Naive thymus-derived CD4-positive, alpha-beta T cell (primary cell): ENCODE measurements at regions of chr19 and their contacts with region 1.

Region 1: DNA sequence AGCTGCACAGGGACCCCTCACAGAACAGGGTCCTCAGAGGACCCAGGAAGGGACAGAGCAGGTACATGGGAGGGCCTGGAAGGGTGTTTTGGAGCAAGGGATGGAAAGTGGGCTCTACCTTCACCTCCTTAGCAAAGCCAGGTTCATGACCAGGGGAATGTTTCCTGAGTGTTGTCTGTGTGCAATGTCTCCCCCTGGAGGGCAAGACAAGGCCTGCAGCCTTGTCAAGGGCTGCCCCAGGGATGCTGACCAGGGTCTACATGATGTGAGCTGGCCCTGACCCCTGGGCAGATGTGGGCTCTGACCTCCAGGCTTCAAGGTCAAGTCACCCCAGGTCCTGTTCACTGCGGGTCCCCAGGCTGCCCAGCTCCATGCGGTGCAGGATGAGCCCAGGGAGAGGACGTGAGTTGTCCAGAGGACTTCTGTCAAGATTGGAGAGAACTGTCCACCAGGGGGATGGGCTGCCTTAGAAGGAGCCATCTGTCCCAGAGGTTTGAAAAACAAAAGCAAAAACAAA is 1.0 kb upstream of the CEACAM1 start:
- DNase-seq: peak; percentile 45 to 76 (median 64)
- ATAC-seq: peak; percentile 94
- H3K4me3 ChIP-seq: peak overlapping the region; percentile 53
- H3K4me3 Mint-ChIP-seq: peak overlapping the region; percentile 77 to 98 (median 87)
- H3K27ac ChIP-seq: peak overlapping the region; percentile 72
- H3K27ac Mint-ChIP-seq: peak overlapping the region; percentile 70 to 96 (median 93)
- H3K4me1 ChIP-seq: peaks cover 18 to 21% of the 10 kb centered on the region in 2 donors
- H3K4me1 Mint-ChIP-seq: peaks cover 31 to 51% (median 40%) of the 10 kb centered on the region in 7 donors
- H3K27me3 ChIP-seq: no peaks in the 10 kb centered on the region
- H3K27me3 Mint-ChIP-seq: peaks cover 0 to under 1% (median 0%) of the 10 kb centered on the region in 5 donors

Region 2: GRCh38 chr19:42440357-42441048 is 88.8 kb before region 1 on chr19:
- CTCF ChIA-PET with region 1: interaction called, 14 read pairs
- POLR2A ChIA-PET with region 1: no interaction called
- intact Hi-C with region 1: no loop called
- DNase-seq: peak; percentile 51 to 84 (median 76)
- ATAC-seq: peak; percentile 75
- H3K4me3 ChIP-seq: no peak overlapping the region
- H3K4me3 Mint-ChIP-seq: peak overlapping the region in 7 of 10 donors; percentile 24 to 69 (median 47)
- H3K27ac ChIP-seq: no peak overlapping the region
- H3K27ac Mint-ChIP-seq: peak overlapping the region in 8 of 9 donors; percentile 2 to 53 (median 25)
- H3K4me1 ChIP-seq: peaks cover 13 to 16% of the 10 kb centered on the region in 2 donors
- H3K4me1 Mint-ChIP-seq: peaks cover 20 to 34% (median 31%) of the 10 kb centered on the region in 7 donors
- H3K27me3 ChIP-seq: no peaks in the 10 kb centered on the region
- H3K27me3 Mint-ChIP-seq: peaks cover 0 to 7% (median 0%) of the 10 kb centered on the region in 5 donors

Region 3: GRCh38 chr19:42480335-42481095 is 48.8 kb before region 1 on chr19:
- CTCF ChIA-PET with region 1: no interaction called
- POLR2A ChIA-PET with region 1: interaction called, 3 read pairs
- intact Hi-C with region 1: loop called in 1 of 2 experiments (anchors 2 kb)
- DNase-seq: peak in 4 of 9 donors; percentile 2 to 13 (median 4)
- ATAC-seq: peak; percentile 53
- H3K4me3 ChIP-seq: no peak overlapping the region
- H3K4me3 Mint-ChIP-seq: peak overlapping the region; percentile 22 to 79 (median 62)
- H3K27ac ChIP-seq: peak overlapping the region; percentile 4
- H3K27ac Mint-ChIP-seq: peak overlapping the region; percentile 18 to 94 (median 77)
- H3K4me1 ChIP-seq: peaks cover 5 to 6% of the 10 kb centered on the region in 2 donors
- H3K4me1 Mint-ChIP-seq: peaks cover 16 to 30% (median 21%) of the 10 kb centered on the region in 7 donors
- H3K27me3 ChIP-seq: no peaks in the 10 kb centered on the region
- H3K27me3 Mint-ChIP-seq: no peaks in the 10 kb centered on the region

Region 4: GRCh38 chr19:42514449-42514848 is 14.9 kb before region 1 on chr19:
- CTCF ChIA-PET with region 1: interaction called, 3 read pairs
- POLR2A ChIA-PET with region 1: interaction called, 3 read pairs
- intact Hi-C with region 1: loop called in 1 of 2 experiments (anchors 2 kb)
- DNase-seq: no peak
- ATAC-seq: no peak
- H3K4me3 ChIP-seq: no peak overlapping the region
- H3K4me3 Mint-ChIP-seq: no peak overlapping the region
- H3K27ac ChIP-seq: no peak overlapping the region
- H3K27ac Mint-ChIP-seq: no peak overlapping the region
- H3K4me1 ChIP-seq: no peaks in the 10 kb centered on the region
- H3K4me1 Mint-ChIP-seq: peaks cover 0 to 41% (median 8%) of the 10 kb centered on the region in 7 donors
- H3K27me3 ChIP-seq: no peaks in the 10 kb centered on the region
- H3K27me3 Mint-ChIP-seq: no peaks in the 10 kb centered on the region

Region 5: DNA sequence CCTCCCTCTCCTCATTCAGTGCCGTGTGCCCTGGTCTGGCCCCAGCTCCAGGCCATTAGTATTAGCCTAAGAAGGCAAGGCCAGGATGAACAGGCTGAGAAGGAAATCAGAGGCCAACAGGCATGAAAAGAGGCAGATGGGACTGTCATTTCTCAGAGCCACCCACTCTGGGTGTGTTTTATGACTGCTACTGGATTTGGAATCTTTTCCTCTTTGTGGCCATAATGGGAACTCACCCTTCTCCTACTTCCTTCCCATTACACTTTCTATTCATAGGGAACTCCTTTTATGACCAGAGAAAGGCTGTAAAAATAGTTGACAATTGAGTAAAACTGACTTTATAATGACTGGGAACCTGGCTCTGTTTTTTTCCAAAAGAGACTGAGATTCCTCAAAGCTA is 47.7 kb after region 1 on chr19:
- CTCF ChIA-PET with region 1: no interaction called
- POLR2A ChIA-PET with region 1: no interaction called
- intact Hi-C with region 1: no loop called
- DNase-seq: no peak
- ATAC-seq: no peak
- H3K4me3 ChIP-seq: no peak overlapping the region
- H3K4me3 Mint-ChIP-seq: no peak overlapping the region
- H3K27ac ChIP-seq: no peak overlapping the region
- H3K27ac Mint-ChIP-seq: no peak overlapping the region
- H3K4me1 ChIP-seq: no peaks in the 10 kb centered on the region
- H3K4me1 Mint-ChIP-seq: no peaks in the 10 kb centered on the region
- H3K27me3 ChIP-seq: no peaks in the 10 kb centered on the region
- H3K27me3 Mint-ChIP-seq: peaks cover 24 to 36% (median 27%) of the 10 kb centered on the region in 5 donors